H1 (cell line): ENCODE measurements at regions of chr16 and their contacts with region 1.

Region 1: DNA sequence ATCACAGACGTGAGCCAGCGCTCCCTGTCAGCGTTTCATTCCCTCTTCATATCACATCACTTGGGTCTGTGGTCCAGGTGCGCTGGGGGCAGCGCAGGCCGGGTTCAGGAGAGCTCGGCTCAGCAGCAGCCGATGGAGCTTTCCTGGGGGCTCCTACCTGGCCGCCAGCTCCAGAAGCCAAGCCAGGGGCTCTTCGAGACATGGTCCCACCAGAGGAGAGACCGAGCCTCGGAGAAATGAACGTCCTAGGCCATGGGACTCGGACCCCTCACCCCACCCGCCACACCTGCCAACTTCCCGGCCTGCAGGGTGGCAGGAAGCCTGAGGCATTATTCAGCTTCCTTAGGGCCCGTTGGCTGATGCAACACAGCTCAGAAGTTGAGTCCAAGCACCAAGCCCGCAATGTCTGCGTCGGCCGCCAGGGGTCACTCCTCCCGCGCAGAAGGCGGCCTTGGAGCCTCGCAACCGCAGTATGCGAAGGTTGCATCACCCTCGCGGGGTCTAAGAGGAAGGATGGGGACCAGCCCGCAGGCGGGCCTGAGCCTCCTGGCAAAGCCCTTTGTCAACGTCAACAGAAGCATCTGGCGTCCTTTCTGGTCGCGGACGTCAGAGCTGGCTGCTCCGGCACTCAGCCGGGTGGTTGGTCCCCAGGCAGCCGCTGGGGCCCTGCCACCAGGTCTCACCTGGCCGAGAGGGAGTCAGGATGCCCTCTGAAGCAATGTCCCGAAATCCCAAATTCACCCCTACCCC is 13.2 kb upstream of the KLHDC4 start:
- DNase-seq: peak; percentile 95 to 99
- H3K4me3 ChIP-seq: no peak overlapping the region
- H3K27ac ChIP-seq: peak overlapping the region; percentile 89
- H3K4me1 ChIP-seq: peaks cover 0 to 8% (median 6%) of the 10 kb centered on the region in 4 experiments; a peak in 5 of 7 replicates
- H3K27me3 ChIP-seq: no peaks in the 10 kb centered on the region
- CTCF ChIP-seq: peak; percentile 93 to 98 (median 97)
- EP300 ChIP-seq: peak in 1 of 2 experiments; percentile 92; a peak in 1 of 3 replicates
- POLR2A ChIP-seq: peak; percentile 47 to 75
- RAD21 ChIP-seq: peak; percentile 99 to 100

Region 2: GRCh38 chr16:87765776-87766484 is 13.1 kb before region 1 on chr16 and contains the start of gene KLHDC4:
- CTCF ChIA-PET with region 1: interaction called, 40 read pairs
- POLR2A ChIA-PET with region 1: interaction called, 6 read pairs
- DNase-seq: peak; percentile 49 to 95
- H3K4me3 ChIP-seq: peak within 1 kb of the TSS; percentile 90 to 97 (median 92)
- H3K27ac ChIP-seq: peak within 1 kb of the TSS; percentile 48
- H3K4me1 ChIP-seq: peaks cover 0 to 4% (median 2%) of the 10 kb centered on the region in 4 experiments; a peak in 3 of 7 replicates
- H3K27me3 ChIP-seq: no peaks in the 10 kb centered on the region
- CTCF ChIP-seq: no peak
- EP300 ChIP-seq: no peak
- POLR2A ChIP-seq: peak; percentile 70 to 88
- RAD21 ChIP-seq: no peak
- total RNA-seq, gene KLHDC4: 55.6 and 63.9 TPM in 2 replicates

Region 3: GRCh38 chr16:87812200-87812656 is 33.2 kb after region 1 on chr16:
- CTCF ChIA-PET with region 1: interaction called, 37 read pairs
- POLR2A ChIA-PET with region 1: interaction called, 27 read pairs
- DNase-seq: no peak
- H3K4me3 ChIP-seq: no peak overlapping the region
- H3K27ac ChIP-seq: no peak overlapping the region
- H3K4me1 ChIP-seq: peaks cover 0 to 2% (median 0%) of the 10 kb centered on the region in 4 experiments; a peak in 3 of 7 replicates
- H3K27me3 ChIP-seq: no peaks in the 10 kb centered on the region
- CTCF ChIP-seq: peak in 2 of 3 experiments; percentile 16 to 25; a peak in 2 of 4 replicates
- EP300 ChIP-seq: no peak
- POLR2A ChIP-seq: no peak
- RAD21 ChIP-seq: peak; percentile 35 to 46

Region 4: DNA sequence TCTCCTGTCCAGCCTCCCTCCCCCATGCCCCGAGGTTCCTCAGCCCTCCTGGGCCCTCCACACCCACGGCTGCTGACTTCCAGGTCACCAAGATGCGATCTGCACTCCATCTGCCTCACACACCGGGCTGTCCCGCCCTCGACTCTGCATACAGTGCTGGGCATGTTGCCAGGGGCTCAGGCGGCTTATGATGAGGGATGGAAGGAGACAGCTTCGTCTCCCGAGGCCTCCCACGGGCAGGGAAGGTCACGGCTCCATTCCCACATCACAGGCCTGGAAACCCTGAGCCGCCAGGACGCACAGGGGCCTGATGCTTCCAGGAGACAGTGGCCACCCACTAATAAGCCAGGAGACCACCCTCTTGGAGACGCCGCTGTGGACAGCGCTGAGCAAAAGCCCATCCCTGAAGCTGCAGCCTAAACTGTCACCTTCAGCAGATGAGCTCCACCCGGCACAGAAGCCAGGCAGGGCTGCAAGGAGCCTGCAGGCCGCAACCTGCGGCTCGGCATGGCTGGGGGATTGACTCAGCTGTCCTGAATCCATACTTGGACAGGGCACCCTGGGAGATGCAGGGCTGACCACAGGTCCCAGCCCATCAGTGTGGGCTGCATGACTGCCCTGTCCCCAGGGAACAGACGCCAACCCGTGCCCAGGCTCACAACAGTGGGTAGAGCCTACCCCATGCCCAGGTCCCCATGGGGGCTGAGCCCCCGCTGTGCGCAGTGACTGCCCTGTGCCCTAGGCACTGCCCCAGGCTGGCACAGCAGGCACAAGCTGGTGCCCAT is 55.8 kb after region 1 on chr16:
- CTCF ChIA-PET with region 1: interaction called, 74 read pairs
- POLR2A ChIA-PET with region 1: interaction called, 117 read pairs
- DNase-seq: no peak
- H3K4me3 ChIP-seq: no peak overlapping the region
- H3K27ac ChIP-seq: no peak overlapping the region
- H3K4me1 ChIP-seq: peaks cover 0 to 10% (median 5%) of the 10 kb centered on the region in 4 experiments; a peak in 6 of 7 replicates
- H3K27me3 ChIP-seq: no peaks in the 10 kb centered on the region
- CTCF ChIP-seq: no peak
- EP300 ChIP-seq: no peak
- POLR2A ChIP-seq: no peak
- RAD21 ChIP-seq: no peak

Region 5: GRCh38 chr16:87860553-87861299 is 81.7 kb after region 1 on chr16:
- CTCF ChIA-PET with region 1: interaction called, 18 read pairs
- POLR2A ChIA-PET with region 1: interaction called, 19 read pairs
- DNase-seq: no peak
- H3K4me3 ChIP-seq: no peak overlapping the region
- H3K27ac ChIP-seq: no peak overlapping the region
- H3K4me1 ChIP-seq: peaks cover 0 to 6% (median 0%) of the 10 kb centered on the region in 4 experiments; a peak in 3 of 7 replicates
- H3K27me3 ChIP-seq: peaks cover 0 to 11% (median 4%) of the 10 kb centered on the region in 4 experiments; a peak in 3 of 7 replicates
- CTCF ChIP-seq: no peak
- EP300 ChIP-seq: no peak
- POLR2A ChIP-seq: no peak; a peak in 1 of 3 replicates
- RAD21 ChIP-seq: no peak

Region 6: GRCh38 chr16:87924422-87925298 is 145.7 kb after region 1 on chr16:
- CTCF ChIA-PET with region 1: interaction called, 24 read pairs
- POLR2A ChIA-PET with region 1: interaction called, 3 read pairs
- DNase-seq: no peak
- H3K4me3 ChIP-seq: no peak overlapping the region
- H3K27ac ChIP-seq: no peak overlapping the region
- H3K4me1 ChIP-seq: peaks cover 0 to 21% (median 3%) of the 10 kb centered on the region in 4 experiments; a peak in 5 of 7 replicates
- H3K27me3 ChIP-seq: no peaks in the 10 kb centered on the region
- CTCF ChIP-seq: no peak
- EP300 ChIP-seq: no peak
- POLR2A ChIP-seq: no peak
- RAD21 ChIP-seq: no peak